GM13976 (cell line): ENCODE measurements at regions of chr3 and their contacts with region 1.

Region 1: DNA sequence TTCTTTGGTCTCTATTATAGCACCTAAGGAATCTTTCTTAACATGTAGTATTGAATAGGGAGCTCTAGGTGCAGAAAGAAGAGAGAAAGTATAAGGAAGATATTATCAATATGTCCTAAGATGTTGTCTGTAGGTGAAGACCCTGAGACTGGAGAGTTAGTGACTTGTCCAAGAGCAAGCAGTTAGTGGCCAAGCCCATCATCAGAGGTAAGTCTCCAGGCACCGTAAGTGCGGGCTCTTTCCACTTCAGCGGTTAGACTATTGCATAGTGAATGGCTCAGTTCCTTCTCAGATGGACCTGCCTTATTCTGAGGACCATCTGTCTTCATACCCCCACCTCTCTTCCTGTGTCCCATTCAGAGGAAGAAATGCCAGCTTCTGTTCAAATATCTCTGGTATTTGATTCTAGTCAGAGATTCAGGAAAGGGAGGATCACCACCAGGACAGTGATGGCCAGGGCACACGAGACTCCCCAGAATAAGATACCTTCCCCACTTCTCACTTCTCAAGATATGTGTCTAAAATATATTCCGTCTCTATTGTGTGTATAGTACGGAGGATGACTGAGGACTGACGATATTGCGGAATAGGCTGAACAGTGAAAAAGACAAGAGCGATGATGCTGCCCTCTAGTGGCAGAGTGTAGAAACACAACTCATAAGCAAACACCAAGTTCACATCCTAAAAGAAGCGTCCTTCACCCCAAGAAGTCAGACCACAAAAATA is 19.1 kb upstream of the ADGRG7 start:
- DNase-seq: peak; percentile 71
- CTCF ChIP-seq: peak; percentile 81

Region 2: DNA sequence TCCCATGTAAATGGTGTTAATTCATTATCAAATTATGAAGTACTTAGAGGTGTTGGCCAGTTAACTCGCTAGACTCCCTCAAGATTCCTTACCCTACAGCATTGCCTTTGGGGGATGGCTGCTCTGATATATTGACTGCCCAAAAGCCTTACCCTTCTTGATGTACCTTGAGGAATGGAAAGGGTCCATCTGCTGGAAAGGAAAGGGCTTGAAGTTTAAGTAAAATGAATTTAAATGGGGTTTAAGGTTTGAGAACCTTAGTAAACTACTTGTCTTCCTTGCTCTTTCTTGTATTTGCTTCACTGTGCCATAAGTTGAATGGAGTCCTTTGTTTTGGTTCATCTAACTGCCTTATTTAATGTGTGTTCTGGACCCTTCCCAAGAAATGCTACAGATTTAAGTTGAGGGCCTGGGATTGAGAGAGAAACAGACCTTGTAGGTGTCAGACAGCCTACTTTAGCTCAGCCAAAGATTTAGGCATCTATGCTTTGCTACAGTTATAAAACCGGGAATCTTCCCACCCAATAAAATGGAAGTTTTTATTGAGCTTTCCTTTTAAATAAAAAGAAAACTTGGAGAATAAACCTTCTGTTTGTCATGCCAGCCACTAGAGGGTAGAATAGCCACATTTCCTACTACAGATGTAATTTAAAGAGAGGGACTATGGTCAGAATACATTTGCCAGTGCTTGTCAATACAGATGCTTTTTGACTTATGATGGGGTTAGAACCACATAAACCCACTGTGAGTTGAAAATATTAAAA is 747.3 kb before region 1 on chr3:
- in situ Hi-C with region 1: loop called (anchors 25 kb)
- DNase-seq: no peak
- CTCF ChIP-seq: peak; percentile 37

Region 3: GRCh38 chr3:100316641-100317069 is 273.6 kb before region 1 on chr3:
- in situ Hi-C with region 1: loop called (anchors 10 kb)
- DNase-seq: peak; percentile 41
- CTCF ChIP-seq: peak; percentile 51

Region 4: DNA sequence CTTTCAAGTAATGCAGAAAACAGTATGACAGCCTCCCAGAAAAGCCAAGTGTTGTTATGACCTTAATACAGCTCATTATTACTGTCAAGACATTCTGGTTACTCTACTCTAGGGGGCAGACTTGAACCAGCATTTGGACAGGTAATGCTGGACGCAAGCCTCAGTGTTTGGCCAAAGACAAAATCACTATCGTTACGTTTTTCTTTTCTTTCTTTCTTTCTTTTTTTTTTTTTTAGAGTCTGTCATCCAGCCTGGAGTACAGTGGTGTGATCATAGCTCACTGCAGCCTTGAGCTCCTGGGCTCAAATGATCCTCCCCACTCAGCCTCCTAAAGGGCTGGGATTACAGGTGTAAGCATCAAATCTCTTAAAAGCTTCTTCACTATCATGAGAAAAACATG is 127.3 kb before region 1 on chr3:
- in situ Hi-C with region 1: loop called (anchors 10 kb)
- DNase-seq: peak; percentile 67
- CTCF ChIP-seq: peak; percentile 62

Region 5: DNA sequence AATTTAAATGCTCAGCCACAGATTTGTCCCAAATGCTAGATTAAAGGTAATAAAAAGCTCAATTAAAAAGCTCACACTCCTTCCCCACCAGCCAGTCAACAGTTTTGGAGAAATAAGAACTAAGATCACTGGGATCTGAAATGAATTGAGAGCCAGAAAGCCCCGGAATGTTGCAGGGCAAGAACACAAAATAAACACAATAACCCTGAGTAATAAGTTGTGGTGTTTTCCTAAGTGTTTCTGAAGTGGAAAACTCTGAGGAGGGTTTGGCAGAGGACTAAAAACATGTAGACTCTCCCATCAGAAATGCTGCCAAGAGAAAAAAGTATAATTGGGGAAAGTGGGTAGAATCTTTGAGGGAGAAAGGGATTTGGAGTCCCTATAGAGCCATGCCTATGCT is 275.2 kb after region 1 on chr3:
- in situ Hi-C with region 1: no loop called
- DNase-seq: no peak
- CTCF ChIP-seq: no peak